Caco-2 (cell line): ENCODE measurements at regions of chr17 and their contacts with region 1.

Region 1: DNA sequence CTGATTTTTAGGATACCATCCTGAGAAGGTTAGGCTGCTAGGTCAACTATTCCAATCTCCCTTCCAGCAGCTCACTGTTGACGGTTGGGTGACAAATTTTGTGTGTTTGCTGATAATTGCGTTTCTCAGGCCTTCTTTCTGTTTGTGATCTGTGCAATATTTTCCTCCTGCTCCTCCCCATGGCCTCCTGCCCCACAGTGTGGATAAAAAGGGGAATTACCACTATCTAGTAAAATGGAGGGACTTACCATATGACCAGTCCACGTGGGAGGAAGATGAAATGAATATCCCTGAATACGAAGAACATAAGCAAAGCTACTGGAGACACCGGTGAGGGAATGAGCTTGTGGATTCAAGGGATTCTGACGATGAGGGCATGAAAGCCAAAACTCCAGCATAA is 9.2 kb downstream of the CHD3 start:
- DNase-seq: peak in 1 of 2 experiments; percentile 47
- H3K4me3 ChIP-seq: no peak overlapping the region
- H3K4me3 Mint-ChIP-seq: no peak overlapping the region
- H3K27ac Mint-ChIP-seq: peak overlapping the region; percentile 53
- H3K4me1 ChIP-seq: no peaks in the 10 kb centered on the region
- H3K4me1 Mint-ChIP-seq: peaks cover 6% of the 10 kb centered on the region
- H3K27me3 ChIP-seq: no peaks in the 10 kb centered on the region
- H3K27me3 Mint-ChIP-seq: no peaks in the 10 kb centered on the region
- CTCF ChIP-seq: peak in 1 of 2 experiments; percentile 48

Region 2: DNA sequence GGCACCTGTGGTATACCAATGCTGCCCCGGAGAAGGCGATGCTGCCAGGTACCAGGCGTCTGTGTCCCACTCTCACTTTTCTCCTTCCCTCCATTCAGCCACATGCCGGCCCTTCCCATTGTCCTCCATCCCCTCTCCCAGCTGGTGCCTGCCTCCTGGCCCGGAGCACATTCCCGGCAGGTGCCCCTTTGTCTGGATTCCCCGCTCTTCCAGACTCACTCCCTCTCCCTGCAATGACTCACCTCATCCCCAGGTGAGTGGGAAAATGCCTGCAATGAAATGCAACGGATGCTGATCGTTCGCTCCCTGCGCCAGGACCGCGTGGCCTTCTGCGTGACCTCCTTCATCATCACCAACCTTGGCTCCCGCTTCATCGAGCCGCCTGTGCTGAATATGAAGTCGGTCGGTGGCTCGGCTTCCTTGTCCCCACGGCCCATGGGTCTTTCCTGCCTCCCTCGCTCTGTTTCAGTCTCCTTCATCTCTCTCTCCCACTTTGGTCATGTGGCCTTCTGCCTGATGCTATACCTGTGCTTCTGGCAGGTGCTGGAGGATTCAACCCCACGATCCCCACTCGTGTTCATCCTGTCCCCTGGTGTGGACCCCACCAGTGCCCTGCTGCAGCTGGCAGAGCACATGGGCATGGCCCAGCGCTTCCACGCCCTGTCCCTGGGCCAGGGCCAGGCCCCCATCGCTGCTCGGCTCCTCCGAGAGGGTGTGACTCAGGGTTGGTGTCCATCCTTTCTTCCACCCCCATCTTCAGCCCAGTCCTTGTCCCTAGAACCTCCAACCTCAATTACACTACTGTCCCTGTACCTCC is 74.0 kb before region 1 on chr17:
- CTCF ChIA-PET with region 1: interaction called, 3 read pairs
- POLR2A ChIA-PET with region 1: no interaction called
- intact Hi-C with region 1: loop called (anchors 5 kb)
- DNase-seq: no peak
- H3K4me3 ChIP-seq: no peak overlapping the region
- H3K4me3 Mint-ChIP-seq: no peak overlapping the region
- H3K27ac Mint-ChIP-seq: no peak overlapping the region
- H3K4me1 ChIP-seq: no peaks in the 10 kb centered on the region
- H3K4me1 Mint-ChIP-seq: peaks cover 10% of the 10 kb centered on the region
- H3K27me3 ChIP-seq: no peaks in the 10 kb centered on the region
- H3K27me3 Mint-ChIP-seq: no peaks in the 10 kb centered on the region
- CTCF ChIP-seq: no peak